A673 (cell line): ENCODE measurements at regions of chr2 and their contacts with region 1.

Region 1: GRCh38 chr2:38315707-38316333 is 61.3 kb downstream of the ATL2 start:
- DNase-seq: peak; percentile 83
- H3K4me3 ChIP-seq: no peak overlapping the region
- H3K27ac ChIP-seq: no peak overlapping the region
- H3K4me1 ChIP-seq: peaks cover 4% of the 10 kb centered on the region
- H3K27me3 ChIP-seq: no peaks in the 10 kb centered on the region
- CTCF ChIP-seq: peak; percentile 76

Region 2: DNA sequence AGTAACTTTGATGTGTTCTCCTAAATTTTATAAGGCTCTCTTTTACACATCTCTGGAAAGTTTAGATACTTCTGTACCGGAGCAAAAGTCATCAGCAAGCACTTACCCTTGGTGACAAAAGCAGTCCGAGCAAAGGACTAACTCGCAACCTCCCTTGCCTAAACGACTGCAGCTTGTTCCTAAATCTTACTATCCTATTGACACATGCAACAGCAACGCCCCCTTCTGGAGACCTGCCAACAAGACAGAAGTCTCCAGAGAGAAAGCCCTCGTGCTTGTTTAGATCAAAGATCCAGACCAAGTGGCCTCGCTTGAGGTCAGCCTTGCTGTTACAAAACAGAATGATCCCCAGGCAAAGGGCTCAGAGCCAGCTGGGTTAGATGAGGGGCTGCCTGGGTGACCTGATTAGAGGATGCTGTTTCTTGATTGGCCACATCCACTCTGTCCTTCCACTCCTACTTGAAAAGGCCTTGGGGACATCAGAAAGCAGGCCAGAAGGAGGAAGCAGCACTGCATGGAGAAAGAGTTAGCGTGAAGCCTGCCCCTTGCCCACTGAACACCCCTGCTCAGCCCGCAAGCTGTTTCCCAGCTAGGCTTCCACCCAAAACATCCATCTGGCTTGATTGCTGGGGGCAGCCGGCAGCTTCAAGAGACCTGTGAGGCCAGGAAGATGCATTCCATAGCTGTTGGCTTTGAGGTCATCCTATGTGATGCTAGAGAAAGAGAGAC is 192.7 kb after region 1 on chr2:
- CTCF ChIA-PET with region 1: interaction called, 23 read pairs
- POLR2A ChIA-PET with region 1: no interaction called
- intact Hi-C with region 1: loop called (anchors 1 kb)
- DNase-seq: peak; percentile 92
- H3K4me3 ChIP-seq: no peak overlapping the region
- H3K27ac ChIP-seq: peak overlapping the region; percentile 36
- H3K4me1 ChIP-seq: peaks cover 20% of the 10 kb centered on the region
- H3K27me3 ChIP-seq: no peaks in the 10 kb centered on the region
- CTCF ChIP-seq: peak; percentile 83

Region 3: GRCh38 chr2:38590053-38590452 is 274.2 kb after region 1 on chr2:
- CTCF ChIA-PET with region 1: interaction called, 4 read pairs
- POLR2A ChIA-PET with region 1: no interaction called
- intact Hi-C with region 1: loop called (anchors 5 kb)
- DNase-seq: peak; percentile 62
- H3K4me3 ChIP-seq: no peak overlapping the region
- H3K27ac ChIP-seq: no peak overlapping the region
- H3K4me1 ChIP-seq: peaks cover 86% of the 10 kb centered on the region
- H3K27me3 ChIP-seq: no peaks in the 10 kb centered on the region
- CTCF ChIP-seq: peak; percentile 60

Region 4: DNA sequence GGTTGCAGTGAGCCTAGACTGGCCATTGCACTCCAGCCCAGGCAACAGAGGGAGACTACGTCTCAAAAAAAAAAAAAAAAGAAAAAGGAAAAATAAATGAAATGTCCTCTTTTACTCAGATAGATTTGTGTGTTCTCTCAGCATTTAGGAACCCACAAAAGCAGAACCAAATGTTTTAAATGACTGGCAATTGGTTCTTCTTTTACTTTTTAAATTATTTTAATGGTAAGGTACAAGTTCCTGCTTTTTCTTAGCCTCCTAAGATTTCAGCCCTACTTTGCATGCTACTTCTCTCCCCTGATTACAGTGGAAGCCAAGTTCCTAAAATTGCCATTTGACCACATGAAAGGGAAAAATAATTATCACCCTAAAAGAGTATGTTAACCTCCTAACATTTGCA is 411.8 kb after region 1 on chr2:
- CTCF ChIA-PET with region 1: no interaction called
- POLR2A ChIA-PET with region 1: no interaction called
- intact Hi-C with region 1: loop called (anchors 2 kb)
- DNase-seq: no peak
- H3K4me3 ChIP-seq: no peak overlapping the region
- H3K27ac ChIP-seq: no peak overlapping the region
- H3K4me1 ChIP-seq: no peaks in the 10 kb centered on the region
- H3K27me3 ChIP-seq: no peaks in the 10 kb centered on the region
- CTCF ChIP-seq: no peak

Region 5: DNA sequence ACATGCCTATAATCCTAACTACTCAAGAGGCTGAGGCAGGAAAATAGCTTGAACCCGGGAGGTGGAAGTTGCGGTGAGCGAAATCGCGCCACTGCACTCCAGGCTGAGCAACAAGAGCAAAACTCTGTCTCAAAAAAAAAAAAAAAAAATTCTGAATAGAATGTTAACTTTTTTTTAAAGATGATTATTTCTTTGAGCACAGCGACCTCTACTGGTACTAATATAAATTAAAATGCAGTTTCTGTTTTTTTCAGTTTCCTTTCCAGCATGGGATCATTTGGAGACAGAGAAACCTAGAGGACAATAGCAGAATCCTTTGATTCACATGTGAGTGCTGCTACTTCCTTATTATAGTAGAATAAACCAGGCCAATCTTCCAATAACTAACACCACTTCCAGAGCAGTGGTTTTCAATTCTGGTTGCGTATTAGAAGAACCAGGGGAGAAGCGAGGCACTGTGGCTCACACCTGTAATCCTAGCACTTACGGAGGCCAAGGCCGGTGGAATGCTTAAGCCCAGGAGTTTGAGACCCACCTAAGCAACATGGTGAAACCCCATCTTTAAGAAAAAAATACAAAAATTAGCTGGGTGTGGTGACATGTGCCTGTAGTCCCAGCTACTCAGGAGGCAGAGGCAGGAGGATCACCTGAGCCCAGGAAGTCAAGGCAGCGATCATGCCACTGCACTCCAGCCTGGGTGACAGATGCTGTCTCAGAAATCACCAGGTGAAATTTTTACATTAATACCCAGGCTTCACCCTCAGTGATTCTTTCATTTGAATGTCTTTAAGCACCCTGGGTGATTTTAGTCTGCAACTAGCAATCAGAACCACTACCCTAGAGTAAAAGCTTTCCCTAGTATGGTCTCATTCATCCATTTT is 425.3 kb after region 1 on chr2:
- CTCF ChIA-PET with region 1: no interaction called
- POLR2A ChIA-PET with region 1: no interaction called
- intact Hi-C with region 1: loop called (anchors 5 kb)
- DNase-seq: peak; percentile 80
- H3K4me3 ChIP-seq: no peak overlapping the region
- H3K27ac ChIP-seq: no peak overlapping the region
- H3K4me1 ChIP-seq: peaks cover 46% of the 10 kb centered on the region
- H3K27me3 ChIP-seq: no peaks in the 10 kb centered on the region
- CTCF ChIP-seq: peak; percentile 62

Region 6: GRCh38 chr2:38835015-38835601 is 519.3 kb after region 1 on chr2:
- CTCF ChIA-PET with region 1: no interaction called
- POLR2A ChIA-PET with region 1: no interaction called
- intact Hi-C with region 1: loop called (anchors 10 kb)
- DNase-seq: peak; percentile 70
- H3K4me3 ChIP-seq: no peak overlapping the region
- H3K27ac ChIP-seq: no peak overlapping the region
- H3K4me1 ChIP-seq: no peaks in the 10 kb centered on the region
- H3K27me3 ChIP-seq: no peaks in the 10 kb centered on the region
- CTCF ChIP-seq: peak; percentile 71